ENCODE measurements at regions of chrX and their contacts with region 1.

Region 1: DNA sequence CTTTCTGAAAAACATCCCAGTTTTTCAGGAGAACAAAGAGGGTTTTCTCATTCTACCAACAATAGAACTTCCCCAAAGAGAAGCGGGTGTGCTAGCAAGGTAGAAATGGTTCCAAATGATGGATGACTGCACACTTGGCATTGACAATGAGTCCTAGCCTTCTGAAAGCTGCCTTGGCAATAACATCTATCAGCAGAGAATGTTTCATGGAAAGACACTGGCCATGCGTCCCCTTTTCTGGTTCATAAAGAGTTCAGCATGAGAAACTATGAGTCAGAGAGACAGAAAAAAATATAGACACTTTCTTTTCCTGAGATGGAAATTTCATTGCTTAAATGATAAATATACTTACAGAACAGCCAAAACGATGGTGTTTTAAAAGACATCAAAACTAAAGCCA is 236.9 kb upstream of the PRKX start:
- DNase-seq: no peak
- H3K4me3 Mint-ChIP-seq: no peak overlapping the region
- H3K27ac Mint-ChIP-seq: no peak overlapping the region
- H3K4me1 Mint-ChIP-seq: no peaks in the 10 kb centered on the region
- H3K27me3 Mint-ChIP-seq: no peaks in the 10 kb centered on the region
- CTCF ChIP-seq: no peak

Region 2: GRCh38 chrX:3940000-3940610 is 10.3 kb before region 1 on chrX:
- CTCF ChIA-PET with region 1: interaction called, 15 read pairs
- POLR2A ChIA-PET with region 1: interaction called, 3 read pairs
- intact Hi-C with region 1: no loop called
- DNase-seq: peak; percentile 38
- H3K4me3 Mint-ChIP-seq: no peak overlapping the region
- H3K27ac Mint-ChIP-seq: no peak overlapping the region
- H3K4me1 Mint-ChIP-seq: no peaks in the 10 kb centered on the region
- H3K27me3 Mint-ChIP-seq: no peaks in the 10 kb centered on the region
- CTCF ChIP-seq: peak; percentile 49